Activated T-helper 1 cell treated with anti-CD3 and anti-CD28 coated beads, Interleukin-12 subunit alpha, Interleukin-12 subunit beta, Interleukin-2, Interleukin-4 antibody, amounts not matched to agents 30 ng/mL and 10 ng/mL and 1 ng/mL, durations not matched to agents 14 hours and 24 hours and 36 hours (primary cell): ENCODE measurements at regions of chr3 and their contacts with region 1.

Region 1: GRCh38 chr3:154967090-154967489 is 113.0 kb upstream of the MME start:
- DNase-seq: no peak
- H3K4me3 Mint-ChIP-seq: no peak overlapping the region
- H3K27ac Mint-ChIP-seq: no peak overlapping the region
- H3K4me1 Mint-ChIP-seq: no peaks in the 10 kb centered on the region
- H3K27me3 Mint-ChIP-seq: no peaks in the 10 kb centered on the region

Region 2: DNA sequence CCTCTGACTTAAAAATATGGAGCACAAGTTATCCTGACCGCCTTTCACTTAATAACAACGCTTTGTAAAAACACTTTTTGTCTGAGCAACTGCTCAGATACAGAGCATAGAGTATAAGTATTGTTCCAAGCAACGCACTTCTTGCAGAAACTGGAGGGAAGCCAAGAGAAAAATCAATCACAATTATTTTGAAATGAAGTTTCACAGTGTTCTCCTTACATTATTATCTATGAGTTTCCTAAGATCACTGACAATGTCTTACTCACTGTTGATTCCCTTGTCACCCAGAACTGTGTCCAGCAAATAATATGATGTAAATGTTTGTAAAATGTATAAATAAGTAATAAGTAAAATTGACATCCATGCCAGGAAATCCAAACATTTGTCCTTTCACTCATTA is 352.5 kb before region 1 on chr3:
- intact Hi-C with region 1: loop called (anchors 5 kb)
- DNase-seq: no peak
- H3K4me3 Mint-ChIP-seq: no peak overlapping the region
- H3K27ac Mint-ChIP-seq: no peak overlapping the region
- H3K4me1 Mint-ChIP-seq: no peaks in the 10 kb centered on the region
- H3K27me3 Mint-ChIP-seq: no peaks in the 10 kb centered on the region